Activated CD4-positive, alpha-beta T cell treated with anti-CD3 and anti-CD28 coated beads, Interleukin-2, amount 10 ng/mL, durations not matched to agents 24 days and 14 days (primary cell): ENCODE measurements at regions of chr10 and their contacts with region 1.

Region 1: GRCh38 chr10:101301249-101301711 is 52.7 kb upstream of the BTRC start:
- DNase-seq: peak; percentile 77
- H3K4me3 Mint-ChIP-seq: no peak overlapping the region
- H3K27ac Mint-ChIP-seq: no peak overlapping the region
- H3K4me1 Mint-ChIP-seq: peaks cover 2% of the 10 kb centered on the region
- H3K27me3 Mint-ChIP-seq: peaks cover 31% of the 10 kb centered on the region

Region 2: DNA sequence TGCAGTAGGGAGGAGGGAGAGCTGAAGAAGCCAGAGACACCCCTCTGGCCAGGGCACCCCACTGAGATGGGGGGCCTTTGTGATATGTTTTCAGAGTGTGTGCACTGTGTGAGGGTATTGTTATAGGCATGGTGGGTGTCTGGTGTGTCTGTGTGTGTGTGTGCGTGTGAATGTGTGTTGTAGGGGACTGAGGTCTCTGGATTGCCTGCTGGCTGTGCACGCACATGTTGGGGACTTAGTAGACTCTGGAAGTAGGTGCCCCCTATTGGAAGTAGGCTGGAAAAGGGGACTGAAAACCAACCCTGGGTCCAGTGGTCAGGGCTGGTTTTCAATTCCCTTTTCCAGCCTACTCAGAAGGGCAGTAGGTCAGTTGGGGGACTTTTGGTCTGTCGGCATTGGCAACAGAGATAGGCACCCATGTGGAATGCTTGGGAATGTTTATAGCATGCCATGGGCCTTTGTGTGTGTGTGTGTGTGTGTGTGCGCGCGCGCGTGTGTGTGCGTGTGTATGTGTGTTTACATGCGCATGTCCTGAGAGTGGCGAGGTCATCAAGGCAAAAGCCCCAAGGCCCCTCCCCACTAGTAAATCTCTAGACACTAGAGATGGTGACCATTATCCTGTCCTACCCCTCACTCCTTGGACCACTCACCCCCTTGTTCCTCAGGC is 686.7 kb before region 1 on chr10:
- intact Hi-C with region 1: no loop called
- DNase-seq: no peak
- H3K4me3 Mint-ChIP-seq: no peak overlapping the region
- H3K27ac Mint-ChIP-seq: no peak overlapping the region
- H3K4me1 Mint-ChIP-seq: no peaks in the 10 kb centered on the region
- H3K27me3 Mint-ChIP-seq: peaks cover 44% of the 10 kb centered on the region

Region 3: GRCh38 chr10:101441541-101442455 is 140.5 kb after region 1 on chr10:
- intact Hi-C with region 1: loop called (anchors 1 kb)
- DNase-seq: peak; percentile 71
- H3K4me3 Mint-ChIP-seq: no peak overlapping the region
- H3K27ac Mint-ChIP-seq: no peak overlapping the region
- H3K4me1 Mint-ChIP-seq: no peaks in the 10 kb centered on the region
- H3K27me3 Mint-ChIP-seq: peaks cover 2% of the 10 kb centered on the region

Region 4: DNA sequence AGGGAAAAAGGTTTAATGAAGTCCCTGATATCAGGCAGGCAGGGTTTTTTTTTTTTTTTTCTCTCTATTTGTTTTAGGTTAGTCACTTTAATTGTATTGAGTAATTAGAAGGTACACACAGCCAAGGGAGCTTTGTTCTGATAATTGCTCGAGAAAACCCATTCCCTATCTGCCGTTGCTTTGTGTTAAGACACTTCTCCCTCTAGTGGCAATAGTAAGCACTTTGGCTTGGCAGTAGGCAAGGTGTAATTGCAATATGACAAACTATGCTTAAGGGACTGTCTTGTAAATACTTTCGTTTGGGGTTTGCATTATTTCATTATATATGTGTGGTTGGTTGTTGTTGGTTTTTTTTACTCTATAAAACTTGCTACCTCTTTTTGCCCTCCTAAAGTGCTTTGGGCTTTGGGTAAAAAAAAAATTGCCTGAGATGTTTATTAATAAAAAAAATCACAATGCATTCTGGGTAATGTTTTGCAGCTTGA is 166.0 kb after region 1 on chr10:
- intact Hi-C with region 1: loop called (anchors 2 kb)
- DNase-seq: peak; percentile 78
- H3K4me3 Mint-ChIP-seq: no peak overlapping the region
- H3K27ac Mint-ChIP-seq: no peak overlapping the region
- H3K4me1 Mint-ChIP-seq: no peaks in the 10 kb centered on the region
- H3K27me3 Mint-ChIP-seq: peaks cover 4% of the 10 kb centered on the region

Region 5: GRCh38 chr10:101569838-101570766 is 268.8 kb after region 1 on chr10:
- intact Hi-C with region 1: loop called (anchors 1 kb)
- DNase-seq: peak; percentile 93
- H3K4me3 Mint-ChIP-seq: peak overlapping the region; percentile 79
- H3K27ac Mint-ChIP-seq: peak overlapping the region; percentile 56
- H3K4me1 Mint-ChIP-seq: peaks cover 17% of the 10 kb centered on the region
- H3K27me3 Mint-ChIP-seq: peaks cover 43% of the 10 kb centered on the region